ENCODE measurements at regions of chr1 and their contacts with region 1.

Region 1: GRCh38 chr1:202998836-202999750 is 8.1 kb upstream of the TMEM183A start:
- DNase-seq: peak; percentile 76
- H3K4me3 ChIP-seq: no peak overlapping the region
- H3K27ac ChIP-seq: no peak overlapping the region
- H3K4me1 ChIP-seq: no peaks in the 10 kb centered on the region
- H3K27me3 ChIP-seq: peaks cover 37% of the 10 kb centered on the region
- CTCF ChIP-seq: peak; percentile 88

Region 2: DNA sequence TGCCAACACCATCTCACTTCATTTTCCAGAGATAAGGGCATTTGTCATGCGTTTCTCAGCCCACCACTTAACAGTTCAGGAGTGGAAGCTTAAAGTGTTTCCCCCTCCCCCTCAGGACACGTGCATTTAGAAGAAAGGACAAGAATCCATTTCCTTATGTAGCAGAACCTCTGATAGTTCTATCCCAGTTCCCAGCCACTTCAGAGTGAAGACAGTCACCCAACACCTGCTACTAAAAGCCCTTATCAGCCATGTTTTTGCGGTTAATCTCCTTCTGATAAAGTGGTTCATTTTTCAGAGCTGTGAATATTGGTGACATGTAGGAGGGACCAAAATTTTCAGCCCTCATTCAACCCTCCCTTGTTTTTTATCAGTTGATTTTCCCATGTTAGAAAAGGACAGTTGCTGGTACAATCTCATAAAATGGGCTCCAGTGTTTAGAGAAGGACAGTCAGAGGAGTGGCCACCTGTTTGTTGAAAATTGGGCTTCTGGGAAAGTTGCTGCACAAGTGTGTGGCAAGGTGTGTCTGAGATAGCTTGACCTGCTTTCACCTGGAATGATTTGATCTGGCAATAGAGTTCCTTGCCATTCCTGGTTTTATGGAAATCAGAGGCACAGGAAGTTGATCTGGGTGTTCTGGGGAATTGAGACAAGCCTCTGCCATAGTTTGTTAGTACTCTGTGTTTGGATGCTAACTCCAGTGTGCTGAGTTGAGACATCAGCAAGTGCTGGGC is 536.6 kb before region 1 on chr1:
- CTCF ChIA-PET with region 1: no interaction called
- POLR2A ChIA-PET with region 1: no interaction called
- intact Hi-C with region 1: loop called (anchors 10 kb)
- DNase-seq: no peak
- H3K4me3 ChIP-seq: no peak overlapping the region
- H3K27ac ChIP-seq: no peak overlapping the region
- H3K4me1 ChIP-seq: no peaks in the 10 kb centered on the region
- H3K27me3 ChIP-seq: no peaks in the 10 kb centered on the region
- CTCF ChIP-seq: no peak

Region 3: GRCh38 chr1:202750758-202751157 is 248.3 kb before region 1 on chr1:
- CTCF ChIA-PET with region 1: no interaction called
- POLR2A ChIA-PET with region 1: no interaction called
- intact Hi-C with region 1: loop called (anchors 10 kb)
- DNase-seq: no peak
- H3K4me3 ChIP-seq: no peak overlapping the region
- H3K27ac ChIP-seq: no peak overlapping the region
- H3K4me1 ChIP-seq: no peaks in the 10 kb centered on the region
- H3K27me3 ChIP-seq: no peaks in the 10 kb centered on the region
- CTCF ChIP-seq: 0 out of 2 replicates have a peak, but pooled peaks have one; percentile 16

Region 4: DNA sequence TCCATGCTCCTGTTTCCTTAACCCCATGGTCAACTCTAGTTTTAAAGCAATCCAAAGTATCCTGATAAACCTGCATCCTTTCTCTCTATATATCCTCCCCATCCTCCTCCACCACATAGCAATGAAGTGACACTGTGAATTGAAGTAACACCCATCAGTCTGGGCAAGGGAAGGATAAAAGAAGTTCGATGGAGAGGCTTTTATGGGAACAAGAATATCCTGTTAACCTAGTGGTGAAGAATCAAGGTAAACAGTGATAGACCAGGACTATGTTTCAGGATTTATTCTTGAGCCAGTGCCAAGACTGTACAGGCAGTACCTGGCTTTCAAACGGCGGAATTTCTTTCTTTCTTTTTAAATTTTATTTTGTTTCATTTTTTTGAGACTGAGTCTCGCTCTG is 127.7 kb before region 1 on chr1:
- CTCF ChIA-PET with region 1: no interaction called
- POLR2A ChIA-PET with region 1: no interaction called
- intact Hi-C with region 1: loop called (anchors 10 kb)
- DNase-seq: no peak
- H3K4me3 ChIP-seq: no peak overlapping the region
- H3K27ac ChIP-seq: no peak overlapping the region
- H3K4me1 ChIP-seq: no peaks in the 10 kb centered on the region
- H3K27me3 ChIP-seq: peaks cover 1% of the 10 kb centered on the region
- CTCF ChIP-seq: no peak

Region 5: GRCh38 chr1:203026031-203026989 is 27.2 kb after region 1 on chr1 and contains the start of gene PPFIA4:
- CTCF ChIA-PET with region 1: no interaction called
- POLR2A ChIA-PET with region 1: no interaction called
- intact Hi-C with region 1: no loop called
- DNase-seq: peak; percentile 92
- H3K4me3 ChIP-seq: peak within 1 kb of the TSS; percentile 55
- H3K27ac ChIP-seq: no peak within 1 kb of the TSS
- H3K4me1 ChIP-seq: peaks cover 5% of the 10 kb centered on the region
- H3K27me3 ChIP-seq: no peaks in the 10 kb centered on the region
- CTCF ChIP-seq: no peak
- total RNA-seq, gene PPFIA4: 2.5 and 3.0 TPM in 2 replicates

Region 6: GRCh38 chr1:203038891-203039608 is 40.0 kb after region 1 on chr1:
- CTCF ChIA-PET with region 1: no interaction called
- POLR2A ChIA-PET with region 1: no interaction called
- intact Hi-C with region 1: no loop called
- DNase-seq: peak; percentile 87
- H3K4me3 ChIP-seq: no peak overlapping the region
- H3K27ac ChIP-seq: no peak overlapping the region
- H3K4me1 ChIP-seq: no peaks in the 10 kb centered on the region
- H3K27me3 ChIP-seq: no peaks in the 10 kb centered on the region
- CTCF ChIP-seq: peak; percentile 96